Mammary epithelial cell (primary cell): ENCODE measurements at regions of chr6 and their contacts with region 1.

Region 1: GRCh38 chr6:112780498-112781096 is 433.5 kb downstream of the RFPL4B start:
- DNase-seq: peak; percentile 61
- H3K4me3 ChIP-seq: no peak overlapping the region
- H3K27ac ChIP-seq: no peak overlapping the region
- H3K4me1 ChIP-seq: no peaks in the 10 kb centered on the region
- H3K27me3 ChIP-seq: no peaks in the 10 kb centered on the region
- CTCF ChIP-seq: peak; percentile 53 to 81

Region 2: GRCh38 chr6:112337209-112337638 is 443.4 kb before region 1 on chr6:
- CTCF ChIA-PET with region 1: no interaction called
- dilution Hi-C with region 1: no loop called
- in situ Hi-C with region 1: no loop called
- intact Hi-C with region 1: loop called (anchors 1 kb)
- DNase-seq: peak; percentile 52
- H3K4me3 ChIP-seq: no peak overlapping the region
- H3K27ac ChIP-seq: no peak overlapping the region
- H3K4me1 ChIP-seq: peaks cover 3% of the 10 kb centered on the region
- H3K27me3 ChIP-seq: no peaks in the 10 kb centered on the region
- CTCF ChIP-seq: peak; percentile 76 to 84

Region 3: DNA sequence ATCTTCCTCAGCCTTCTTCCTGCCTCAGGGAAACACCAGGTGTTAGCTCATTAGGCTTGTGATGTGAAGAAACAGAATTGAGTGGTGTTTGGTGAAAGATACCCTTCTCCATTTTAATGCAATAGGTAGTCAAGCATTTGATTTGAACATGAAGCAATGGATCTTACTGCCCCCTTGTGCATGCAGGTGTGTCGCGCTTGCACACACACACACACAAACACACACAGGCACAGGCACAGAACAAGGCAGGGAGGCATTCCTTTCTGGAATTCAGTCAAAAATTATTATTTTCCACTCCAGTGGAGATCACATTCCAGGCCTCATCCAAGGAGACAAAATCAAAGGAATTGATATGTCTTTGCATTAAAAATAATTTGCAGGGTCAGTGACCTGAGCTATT is 409.6 kb after region 1 on chr6:
- CTCF ChIA-PET with region 1: no interaction called
- dilution Hi-C with region 1: no loop called
- in situ Hi-C with region 1: no loop called
- intact Hi-C with region 1: loop called (anchors 1 kb)
- DNase-seq: no peak
- H3K4me3 ChIP-seq: no peak overlapping the region
- H3K27ac ChIP-seq: no peak overlapping the region
- H3K4me1 ChIP-seq: no peaks in the 10 kb centered on the region
- H3K27me3 ChIP-seq: no peaks in the 10 kb centered on the region
- CTCF ChIP-seq: peak in 1 of 2 donors; percentile 35

Region 4: GRCh38 chr6:113488812-113489685 is 708.5 kb after region 1 on chr6:
- CTCF ChIA-PET with region 1: no interaction called
- dilution Hi-C with region 1: no loop called
- in situ Hi-C with region 1: no loop called
- intact Hi-C with region 1: loop called (anchors 5 kb)
- DNase-seq: no peak
- H3K4me3 ChIP-seq: no peak overlapping the region
- H3K27ac ChIP-seq: no peak overlapping the region
- H3K4me1 ChIP-seq: peaks cover 1% of the 10 kb centered on the region
- H3K27me3 ChIP-seq: no peaks in the 10 kb centered on the region
- CTCF ChIP-seq: peak; percentile 15 to 42

Region 5: GRCh38 chr6:113894712-113895674 is 1114.4 kb after region 1 on chr6:
- CTCF ChIA-PET with region 1: no interaction called
- dilution Hi-C with region 1: loop called (anchors 25 kb)
- in situ Hi-C with region 1: loop called (anchors 10 to 25 kb)
- intact Hi-C with region 1: no loop called
- DNase-seq: no peak
- H3K4me3 ChIP-seq: no peak overlapping the region
- H3K27ac ChIP-seq: no peak overlapping the region
- H3K4me1 ChIP-seq: no peaks in the 10 kb centered on the region
- H3K27me3 ChIP-seq: no peaks in the 10 kb centered on the region
- CTCF ChIP-seq: no peak

Region 6: GRCh38 chr6:114108119-114109002 is 1327.8 kb after region 1 on chr6:
- CTCF ChIA-PET with region 1: no interaction called
- dilution Hi-C with region 1: no loop called
- in situ Hi-C with region 1: no loop called
- intact Hi-C with region 1: loop called (anchors 5 kb)
- DNase-seq: peak; percentile 65
- H3K4me3 ChIP-seq: no peak overlapping the region
- H3K27ac ChIP-seq: no peak overlapping the region
- H3K4me1 ChIP-seq: no peaks in the 10 kb centered on the region
- H3K27me3 ChIP-seq: peaks cover 7% of the 10 kb centered on the region
- CTCF ChIP-seq: peak; percentile 75 to 80